ENCODE measurements at regions of chr20 and their contacts with region 1.

Region 1: GRCh38 chr20:41028348-41029148 is at the start of gene TOP1:
- DNase-seq: peak; percentile 100
- H3K4me3 ChIP-seq: peak within 1 kb of the TSS; percentile 83 to 98 (median 96)
- H3K27ac ChIP-seq: peak within 1 kb of the TSS; percentile 98
- H3K4me1 ChIP-seq: peaks cover 38% of the 10 kb centered on the region
- H3K27me3 ChIP-seq: no peaks in the 10 kb centered on the region
- CTCF ChIP-seq: no peak
- POLR2A ChIP-seq: peak; percentile 97
- total RNA-seq, gene TOP1: 75.1 and 77.4 TPM in 2 replicates

Region 2: DNA sequence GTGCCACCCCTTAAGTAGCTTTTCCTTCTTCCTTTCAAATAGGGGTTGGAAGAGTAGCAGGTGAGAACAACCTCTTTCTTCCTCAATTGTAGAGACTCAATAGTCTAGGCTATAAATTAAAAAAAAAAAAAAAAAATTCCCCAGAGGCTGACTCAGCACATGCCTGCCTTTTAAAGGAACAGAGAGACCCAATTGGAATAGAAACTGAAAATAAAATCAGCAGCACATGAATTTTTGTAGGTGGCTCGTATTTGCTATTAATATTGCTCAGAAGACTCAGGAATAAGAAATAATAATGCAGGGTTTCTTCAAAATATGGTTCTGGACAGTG is 19.4 kb after region 1 on chr20:
- CTCF ChIA-PET with region 1: interaction called, 12 read pairs
- POLR2A ChIA-PET with region 1: no interaction called
- dilution Hi-C with region 1: no loop called
- intact Hi-C with region 1: loop called (anchors 2 kb)
- DNase-seq: no peak
- H3K4me3 ChIP-seq: no peak overlapping the region
- H3K27ac ChIP-seq: no peak overlapping the region
- H3K4me1 ChIP-seq: peaks cover 31% of the 10 kb centered on the region
- H3K27me3 ChIP-seq: no peaks in the 10 kb centered on the region
- CTCF ChIP-seq: no peak
- POLR2A ChIP-seq: no peak

Region 3: DNA sequence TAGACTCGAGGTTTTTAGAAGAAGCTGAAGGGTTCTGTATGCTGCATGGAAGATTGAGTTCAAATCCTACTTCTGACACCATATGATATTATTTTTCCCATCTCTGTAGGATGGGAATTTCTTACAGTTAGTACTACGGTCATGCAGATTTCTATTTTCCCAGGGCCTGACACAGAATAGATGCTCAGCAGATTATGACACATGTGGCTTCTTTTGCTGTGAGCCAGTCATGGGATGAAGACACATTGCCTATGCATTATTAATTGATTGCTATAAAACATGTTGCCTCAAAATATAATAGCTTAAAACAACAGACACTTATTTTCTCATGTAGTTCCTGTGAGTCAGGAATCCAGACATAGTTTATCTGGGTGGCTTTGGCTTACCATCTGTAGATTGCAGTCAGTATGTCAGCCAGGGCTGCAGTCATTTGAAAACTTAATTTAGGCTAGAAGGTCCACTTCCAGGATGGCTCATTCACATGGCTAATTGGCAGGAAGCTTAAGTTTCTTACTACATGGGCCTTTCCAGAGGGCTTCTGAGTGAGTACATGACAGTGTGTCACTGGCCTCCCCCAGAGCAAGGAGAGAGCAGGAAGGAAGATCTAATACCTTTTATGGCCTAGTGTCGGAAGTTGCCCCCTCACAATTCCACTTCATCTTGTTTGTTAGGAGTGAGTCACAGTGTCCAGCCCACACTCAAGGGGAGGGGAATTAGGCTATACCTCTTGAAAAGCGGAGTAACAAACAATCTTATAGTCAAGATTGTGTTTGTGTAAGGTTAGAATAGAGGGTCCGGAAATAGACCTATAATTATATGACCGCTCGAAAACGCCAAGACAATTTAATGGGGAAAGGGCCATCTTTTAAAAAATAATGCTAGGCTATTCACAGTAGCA is 29.7 kb after region 1 on chr20:
- CTCF ChIA-PET with region 1: interaction called, 12 read pairs
- POLR2A ChIA-PET with region 1: no interaction called
- dilution Hi-C with region 1: no loop called
- intact Hi-C with region 1: loop called (anchors 1 kb)
- DNase-seq: peak; percentile 71
- H3K4me3 ChIP-seq: no peak overlapping the region
- H3K27ac ChIP-seq: peak overlapping the region; percentile 30
- H3K4me1 ChIP-seq: peaks cover 30% of the 10 kb centered on the region
- H3K27me3 ChIP-seq: no peaks in the 10 kb centered on the region
- CTCF ChIP-seq: no peak
- POLR2A ChIP-seq: no peak

Region 4: GRCh38 chr20:41078329-41078728 is 49.8 kb after region 1 on chr20:
- CTCF ChIA-PET with region 1: interaction called, 15 read pairs
- POLR2A ChIA-PET with region 1: interaction called, 3 read pairs
- dilution Hi-C with region 1: no loop called
- intact Hi-C with region 1: loop called (anchors 1 kb)
- DNase-seq: peak; percentile 86
- H3K4me3 ChIP-seq: no peak overlapping the region
- H3K27ac ChIP-seq: no peak overlapping the region
- H3K4me1 ChIP-seq: peaks cover 64% of the 10 kb centered on the region
- H3K27me3 ChIP-seq: no peaks in the 10 kb centered on the region
- CTCF ChIP-seq: peak; percentile 49 to 52
- POLR2A ChIP-seq: peak; percentile 52

Region 5: GRCh38 chr20:41095110-41095969 is 66.8 kb after region 1 on chr20:
- CTCF ChIA-PET with region 1: interaction called, 12 read pairs
- POLR2A ChIA-PET with region 1: no interaction called
- dilution Hi-C with region 1: no loop called
- intact Hi-C with region 1: loop called (anchors 2 kb)
- DNase-seq: peak; percentile 71
- H3K4me3 ChIP-seq: no peak overlapping the region
- H3K27ac ChIP-seq: no peak overlapping the region
- H3K4me1 ChIP-seq: peaks cover 14% of the 10 kb centered on the region
- H3K27me3 ChIP-seq: no peaks in the 10 kb centered on the region
- CTCF ChIP-seq: peak; percentile 67 to 75
- POLR2A ChIP-seq: no peak

Region 6: GRCh38 chr20:41191562-41192500 is 163.3 kb after region 1 on chr20:
- CTCF ChIA-PET with region 1: no interaction called
- POLR2A ChIA-PET with region 1: no interaction called
- dilution Hi-C with region 1: no loop called
- intact Hi-C with region 1: no loop called
- DNase-seq: no peak
- H3K4me3 ChIP-seq: no peak overlapping the region
- H3K27ac ChIP-seq: no peak overlapping the region
- H3K4me1 ChIP-seq: no peaks in the 10 kb centered on the region
- H3K27me3 ChIP-seq: no peaks in the 10 kb centered on the region
- CTCF ChIP-seq: no peak
- POLR2A ChIP-seq: no peak

Measured in endothelial cell of umbilical vein (primary cell).